Activated CD4-positive, alpha-beta memory T cell treated with anti-CD3 and anti-CD28 coated beads, Interleukin-2, amount 10 ng/mL, durations not matched to agents 7 days and 5 days (primary cell): ENCODE measurements at regions of chr17 and their contacts with region 1.

Region 1: GRCh38 chr17:4709794-4710692 is at the start of gene ARRB2:
- DNase-seq: peak; percentile 99
- H3K4me3 Mint-ChIP-seq: peak within 1 kb of the TSS; percentile 93
- H3K27ac Mint-ChIP-seq: peak within 1 kb of the TSS; percentile 98
- H3K4me1 Mint-ChIP-seq: peaks cover 65% of the 10 kb centered on the region
- H3K27me3 Mint-ChIP-seq: no peaks in the 10 kb centered on the region
- total RNA-seq, gene ARRB2: 372 to 378 TPM

Region 2: DNA sequence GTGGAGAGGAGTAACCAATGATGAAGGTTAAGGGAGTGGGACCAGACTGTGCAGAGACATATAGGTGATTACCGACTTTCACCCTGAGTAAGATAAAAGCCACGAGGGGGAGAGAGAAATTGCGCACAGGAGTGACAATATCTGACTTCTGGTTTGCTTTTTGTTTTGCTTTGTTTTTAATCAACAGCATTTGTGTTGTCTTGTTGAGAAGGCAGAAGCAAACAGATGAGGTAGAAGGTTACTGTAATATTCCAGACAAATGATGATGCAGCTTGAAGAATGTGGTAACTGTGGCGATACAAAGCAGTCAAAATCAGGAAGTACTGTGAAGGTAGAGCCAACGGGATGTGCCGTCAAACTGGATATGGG is 13.6 kb before region 1 on chr17:
- CTCF ChIA-PET with region 1: interaction called, 8 read pairs
- POLR2A ChIA-PET with region 1: interaction called, 13 read pairs
- DNase-seq: peak; percentile 46
- H3K4me3 Mint-ChIP-seq: peak overlapping the region; percentile 67
- H3K27ac Mint-ChIP-seq: peak overlapping the region; percentile 96
- H3K4me1 Mint-ChIP-seq: peaks cover 37% of the 10 kb centered on the region
- H3K27me3 Mint-ChIP-seq: no peaks in the 10 kb centered on the region

Region 3: GRCh38 chr17:4721203-4722135 is 11.4 kb after region 1 on chr17:
- CTCF ChIA-PET with region 1: interaction called, 4 read pairs
- POLR2A ChIA-PET with region 1: interaction called, 105 read pairs
- DNase-seq: peak; percentile 35
- H3K4me3 Mint-ChIP-seq: no peak overlapping the region
- H3K27ac Mint-ChIP-seq: peak overlapping the region; percentile 41
- H3K4me1 Mint-ChIP-seq: peaks cover 55% of the 10 kb centered on the region
- H3K27me3 Mint-ChIP-seq: no peaks in the 10 kb centered on the region

Region 4: GRCh38 chr17:4733073-4733531 is 23.1 kb after region 1 on chr17:
- CTCF ChIA-PET with region 1: interaction called, 9 read pairs
- POLR2A ChIA-PET with region 1: interaction called, 105 read pairs
- DNase-seq: no peak
- H3K4me3 Mint-ChIP-seq: peak overlapping the region; percentile 30
- H3K27ac Mint-ChIP-seq: no peak overlapping the region
- H3K4me1 Mint-ChIP-seq: peaks cover 52% of the 10 kb centered on the region
- H3K27me3 Mint-ChIP-seq: peaks cover 8% of the 10 kb centered on the region

Region 5: GRCh38 chr17:4881761-4882555 is 171.9 kb after region 1 on chr17:
- CTCF ChIA-PET with region 1: interaction called, 18 read pairs
- POLR2A ChIA-PET with region 1: interaction called, 6 read pairs
- DNase-seq: peak; percentile 66
- H3K4me3 Mint-ChIP-seq: no peak overlapping the region
- H3K27ac Mint-ChIP-seq: no peak overlapping the region
- H3K4me1 Mint-ChIP-seq: no peaks in the 10 kb centered on the region
- H3K27me3 Mint-ChIP-seq: no peaks in the 10 kb centered on the region

Region 6: GRCh38 chr17:4903051-4903818 is 193.2 kb after region 1 on chr17 and contains the start of gene CHRNE:
- CTCF ChIA-PET with region 1: interaction called, 10 read pairs
- POLR2A ChIA-PET with region 1: interaction called, 12 read pairs
- DNase-seq: peak; percentile 81
- H3K4me3 Mint-ChIP-seq: peak within 1 kb of the TSS; percentile 2
- H3K27ac Mint-ChIP-seq: peak within 1 kb of the TSS; percentile 8
- H3K4me1 Mint-ChIP-seq: peaks cover 40% of the 10 kb centered on the region
- H3K27me3 Mint-ChIP-seq: peaks cover 11% of the 10 kb centered on the region
- total RNA-seq, gene CHRNE: 0.33 to 0.43 TPM

Region 7: DNA sequence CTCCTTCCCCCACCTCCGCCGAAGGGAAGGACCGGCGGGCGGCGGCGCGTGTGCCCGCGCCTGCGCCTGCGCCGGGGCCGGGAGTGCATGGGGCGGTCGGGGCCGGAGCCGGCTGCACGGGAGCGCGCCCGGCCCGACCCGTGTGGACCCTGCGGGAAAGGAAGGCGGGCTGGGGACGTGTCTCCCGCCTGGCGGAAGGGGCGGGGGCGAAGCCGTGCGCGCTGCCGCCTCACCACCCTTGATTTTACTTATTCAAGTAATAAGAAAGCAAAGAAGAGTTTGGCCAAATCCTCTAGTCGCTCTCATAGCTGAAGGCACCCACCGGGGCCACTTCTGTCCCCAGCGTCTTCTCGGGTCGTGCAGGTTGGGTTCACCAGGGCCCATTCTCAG is 238.9 kb after region 1 on chr17:
- CTCF ChIA-PET with region 1: no interaction called
- POLR2A ChIA-PET with region 1: interaction called, 15 read pairs
- DNase-seq: peak; percentile 83
- H3K4me3 Mint-ChIP-seq: peak overlapping the region; percentile 96
- H3K27ac Mint-ChIP-seq: peak overlapping the region; percentile 100
- H3K4me1 Mint-ChIP-seq: peaks cover 44% of the 10 kb centered on the region
- H3K27me3 Mint-ChIP-seq: no peaks in the 10 kb centered on the region